Mammary epithelial cell (primary cell): ENCODE measurements at regions of chr12 and their contacts with region 1.

Region 1: GRCh38 chr12:116599285-116600136 is 40.3 kb downstream of the MAP1LC3B2 start:
- DNase-seq: peak; percentile 27
- H3K4me3 ChIP-seq: no peak overlapping the region
- H3K27ac ChIP-seq: no peak overlapping the region
- H3K4me1 ChIP-seq: peaks cover 12% of the 10 kb centered on the region
- H3K27me3 ChIP-seq: no peaks in the 10 kb centered on the region
- CTCF ChIP-seq: peak; percentile 53 to 71

Region 2: DNA sequence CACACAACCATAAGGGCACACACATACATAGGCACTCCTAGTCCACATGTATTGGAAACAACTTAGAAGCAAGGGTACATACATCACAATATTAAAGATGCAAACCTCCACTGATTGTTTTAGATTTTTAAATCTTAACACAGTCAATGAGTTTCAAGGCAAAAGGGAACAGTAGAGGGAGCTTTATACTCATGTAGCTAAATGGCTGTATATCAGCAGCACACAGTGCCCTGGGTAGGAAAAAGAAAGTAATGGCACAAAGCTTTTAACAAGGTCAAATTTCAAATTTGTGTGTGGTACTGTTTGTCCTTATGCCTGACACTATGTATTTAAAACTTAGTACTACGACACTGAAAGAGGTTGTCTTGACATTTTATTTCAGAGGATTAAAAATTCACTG is 584.0 kb before region 1 on chr12:
- CTCF ChIA-PET with region 1: no interaction called
- dilution Hi-C with region 1: no loop called
- in situ Hi-C with region 1: loop called in 1 of 2 experiments (anchors 25 kb)
- intact Hi-C with region 1: no loop called
- DNase-seq: peak; percentile 31
- H3K4me3 ChIP-seq: no peak overlapping the region
- H3K27ac ChIP-seq: no peak overlapping the region
- H3K4me1 ChIP-seq: no peaks in the 10 kb centered on the region
- H3K27me3 ChIP-seq: no peaks in the 10 kb centered on the region
- CTCF ChIP-seq: peak; percentile 19 to 56

Region 3: GRCh38 chr12:116142936-116143898 is 456.3 kb before region 1 on chr12:
- CTCF ChIA-PET with region 1: no interaction called
- dilution Hi-C with region 1: no loop called
- in situ Hi-C with region 1: no loop called
- intact Hi-C with region 1: loop called (anchors 5 kb)
- DNase-seq: peak; percentile 75
- H3K4me3 ChIP-seq: no peak overlapping the region
- H3K27ac ChIP-seq: peak overlapping the region; percentile 33
- H3K4me1 ChIP-seq: peaks cover 26% of the 10 kb centered on the region
- H3K27me3 ChIP-seq: no peaks in the 10 kb centered on the region
- CTCF ChIP-seq: no peak

Region 4: GRCh38 chr12:116277393-116278278 is 321.9 kb before region 1 on chr12 and contains the start of gene MED13L:
- CTCF ChIA-PET with region 1: no interaction called
- dilution Hi-C with region 1: no loop called
- in situ Hi-C with region 1: loop called in 1 of 2 experiments (anchors 25 kb)
- intact Hi-C with region 1: loop called (anchors 2 kb)
- DNase-seq: peak; percentile 83
- H3K4me3 ChIP-seq: peak within 1 kb of the TSS; percentile 72 to 91 (median 89)
- H3K27ac ChIP-seq: peak within 1 kb of the TSS; percentile 65
- H3K4me1 ChIP-seq: peaks cover 4% of the 10 kb centered on the region
- H3K27me3 ChIP-seq: no peaks in the 10 kb centered on the region
- CTCF ChIP-seq: peak in 1 of 2 donors; percentile 35
- total RNA-seq, gene MED13L: 85.6 to 140 TPM

Region 5: DNA sequence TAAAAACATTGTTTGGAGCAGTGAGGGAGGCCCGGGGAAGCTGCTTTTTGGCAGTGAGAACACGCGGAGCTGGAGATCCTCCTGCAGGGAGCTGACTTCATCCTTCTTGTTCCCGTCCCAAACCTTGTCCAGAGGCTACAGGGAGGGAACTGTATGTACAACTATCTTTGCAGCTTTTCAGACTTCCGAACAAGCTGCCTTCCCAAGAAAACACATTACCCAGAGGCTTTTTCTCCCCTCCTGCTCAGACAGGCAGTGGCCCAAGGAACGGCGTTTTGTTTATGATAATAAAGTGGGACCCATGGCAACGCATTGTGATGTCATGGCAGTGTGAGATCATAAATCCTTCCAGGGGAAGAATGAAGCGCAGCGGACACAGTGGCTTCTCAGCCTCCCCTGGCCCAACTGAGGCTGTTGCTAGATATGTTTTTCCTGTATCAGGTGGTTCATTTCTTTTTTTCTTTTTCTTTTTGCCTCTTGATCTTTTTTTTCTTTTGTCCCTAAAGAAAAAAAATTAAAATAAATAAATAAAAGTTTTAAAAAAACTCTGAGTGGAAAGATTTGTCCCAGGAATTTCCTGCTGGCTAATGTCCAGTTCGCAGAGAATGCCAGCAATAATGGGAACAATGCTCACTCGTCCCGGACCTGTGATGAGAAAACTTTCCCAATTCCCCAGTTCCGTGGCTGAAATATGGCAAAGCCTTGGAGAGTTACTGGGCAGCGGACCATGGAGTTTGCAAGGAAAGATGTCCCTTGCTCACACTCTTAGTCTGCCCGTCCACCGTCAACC is 143.8 kb before region 1 on chr12:
- CTCF ChIA-PET with region 1: no interaction called
- dilution Hi-C with region 1: no loop called
- in situ Hi-C with region 1: no loop called
- intact Hi-C with region 1: loop called (anchors 10 kb)
- DNase-seq: peak; percentile 83
- H3K4me3 ChIP-seq: no peak overlapping the region
- H3K27ac ChIP-seq: peak overlapping the region; percentile 99
- H3K4me1 ChIP-seq: peaks cover 23% of the 10 kb centered on the region
- H3K27me3 ChIP-seq: no peaks in the 10 kb centered on the region
- CTCF ChIP-seq: no peak

Region 6: GRCh38 chr12:116525418-116526001 is 74.0 kb before region 1 on chr12:
- CTCF ChIA-PET with region 1: no interaction called
- dilution Hi-C with region 1: no loop called
- in situ Hi-C with region 1: no loop called
- intact Hi-C with region 1: loop called (anchors 2 kb)
- DNase-seq: peak; percentile 89
- H3K4me3 ChIP-seq: peak overlapping the region in 2 of 3 experiments; percentile 12 to 13
- H3K27ac ChIP-seq: peak overlapping the region; percentile 93
- H3K4me1 ChIP-seq: peaks cover 54% of the 10 kb centered on the region
- H3K27me3 ChIP-seq: no peaks in the 10 kb centered on the region
- CTCF ChIP-seq: no peak